ENCODE measurements at regions of chr11 and their contacts with region 1.

Region 1: DNA sequence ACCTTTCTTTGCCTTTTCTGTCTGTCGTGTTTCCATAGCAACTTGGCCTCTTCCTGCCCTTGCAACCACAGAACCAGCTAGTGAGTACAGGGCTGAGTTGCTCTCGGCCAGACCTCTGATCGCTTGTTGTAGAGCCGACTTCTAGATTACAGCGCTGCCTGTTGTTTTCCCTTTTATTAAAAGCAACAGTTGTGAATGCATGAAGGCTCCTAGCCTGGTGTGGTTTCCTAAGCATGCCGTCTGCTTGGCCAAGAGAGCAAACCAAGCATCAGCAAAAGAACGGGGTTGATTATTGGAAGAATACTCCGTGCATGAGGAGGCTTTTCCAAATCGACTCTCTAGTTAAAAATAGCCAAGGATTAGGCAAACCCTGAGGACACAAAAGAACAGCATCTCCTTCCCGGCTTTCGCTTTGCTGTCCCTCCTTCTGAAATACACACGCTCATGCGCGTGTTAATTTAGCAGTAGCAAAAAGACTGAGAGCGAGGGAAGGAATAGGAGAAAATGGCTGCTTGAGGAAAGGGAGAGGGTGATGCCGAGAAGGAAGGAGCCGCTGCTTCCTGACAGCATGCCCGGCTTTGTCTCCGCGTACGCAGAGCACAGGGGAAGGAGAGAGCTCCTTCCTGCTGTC is 71.5 kb upstream of the TTC12 start:
- DNase-seq: no peak
- H3K4me3 ChIP-seq: peak overlapping the region; percentile 42 to 59 (median 52)
- H3K27ac ChIP-seq: peak overlapping the region; percentile 73 to 84 (median 77)
- H3K4me1 ChIP-seq: peaks cover 0 to 48% (median 40%) of the 10 kb centered on the region in 4 donors
- H3K27me3 ChIP-seq: no peaks in the 10 kb centered on the region
- CTCF ChIP-seq: no peak
- EP300 ChIP-seq: no peak
- POLR2A ChIP-seq: no peak

Region 2: DNA sequence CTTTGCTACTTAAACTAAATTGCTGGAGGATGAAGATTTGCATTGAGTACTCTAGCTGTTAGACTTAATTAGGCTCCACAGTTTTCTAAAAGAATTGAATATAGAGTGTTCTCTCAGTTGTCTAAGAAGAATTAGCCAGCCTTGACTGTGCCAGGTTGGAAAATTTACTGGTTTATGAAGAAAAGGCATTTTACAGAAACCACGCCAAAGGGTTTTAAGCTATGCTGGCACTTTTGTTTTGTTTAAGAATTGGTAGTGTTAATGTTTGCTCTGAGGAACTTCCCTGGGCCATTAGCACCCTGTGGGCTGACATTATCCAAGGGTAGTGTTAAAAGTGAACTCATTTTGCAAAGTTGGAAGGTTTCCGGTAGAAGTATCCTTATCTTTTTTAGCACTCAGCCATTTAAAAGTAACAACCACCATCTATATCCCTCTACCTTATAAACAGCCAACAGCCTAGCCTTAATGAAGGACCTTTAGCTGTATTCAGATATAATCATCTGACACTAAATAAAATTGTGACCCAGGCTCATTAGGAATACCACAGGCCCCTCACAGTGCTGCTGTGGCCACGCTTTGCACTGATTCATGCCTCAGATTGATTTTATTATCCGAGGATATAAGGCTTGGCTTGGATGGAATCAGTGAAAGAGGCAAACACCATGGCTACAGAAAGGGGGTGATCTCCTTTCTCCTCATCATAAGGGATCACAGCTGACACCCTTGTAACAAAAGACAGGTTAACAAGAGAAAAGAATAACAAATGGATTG is 122.7 kb before region 1 on chr11:
- intact Hi-C with region 1: loop called (anchors 10 kb)
- DNase-seq: no peak
- H3K4me3 ChIP-seq: no peak overlapping the region
- H3K27ac ChIP-seq: peak overlapping the region in 1 of 4 donors; percentile 25
- H3K4me1 ChIP-seq: peaks cover 17 to 29% (median 23%) of the 10 kb centered on the region in 4 donors
- H3K27me3 ChIP-seq: no peaks in the 10 kb centered on the region
- CTCF ChIP-seq: no peak
- EP300 ChIP-seq: no peak
- POLR2A ChIP-seq: no peak

Region 3: DNA sequence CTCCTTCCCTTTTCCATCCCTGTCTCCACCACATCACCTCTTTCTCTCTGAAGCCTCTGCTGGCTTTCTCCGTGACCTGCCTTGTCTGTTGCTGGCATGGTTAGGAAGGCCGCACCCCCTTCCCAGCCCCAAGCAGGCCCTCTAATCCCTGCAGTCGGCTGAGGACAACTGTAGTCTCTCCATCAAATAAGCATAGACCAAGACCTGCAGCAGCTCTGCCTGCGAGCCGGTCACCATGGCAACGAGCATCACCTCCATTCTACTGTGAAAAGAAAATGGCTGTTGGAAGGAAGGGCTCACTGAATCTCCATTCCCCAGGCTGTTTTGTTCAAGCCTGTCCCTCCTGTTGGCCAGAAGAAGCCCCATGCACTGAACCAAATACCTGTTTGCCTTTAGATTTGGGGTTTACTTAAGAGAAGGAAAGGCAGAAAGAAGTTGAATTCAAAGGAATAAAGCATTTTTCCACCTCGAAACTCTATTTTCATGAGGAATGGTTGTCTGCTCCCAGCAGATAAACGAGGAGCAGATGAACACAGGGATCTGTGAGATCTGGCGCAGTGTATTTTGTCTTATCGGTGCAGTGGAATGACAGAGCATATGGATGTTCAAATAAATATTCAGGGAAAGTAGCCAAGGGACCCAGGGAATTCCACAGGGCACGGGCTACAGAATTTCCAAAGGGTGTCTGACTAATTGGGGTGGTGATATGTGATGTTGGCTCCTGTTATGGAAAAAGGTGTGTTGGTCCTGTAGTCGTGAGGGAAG is 41.6 kb before region 1 on chr11:
- intact Hi-C with region 1: no loop called
- DNase-seq: no peak
- H3K4me3 ChIP-seq: no peak overlapping the region
- H3K27ac ChIP-seq: no peak overlapping the region
- H3K4me1 ChIP-seq: peaks cover 5 to 20% (median 19%) of the 10 kb centered on the region in 4 donors
- H3K27me3 ChIP-seq: no peaks in the 10 kb centered on the region
- CTCF ChIP-seq: no peak
- EP300 ChIP-seq: no peak
- POLR2A ChIP-seq: no peak